ENCODE measurements at regions of chr4 and their contacts with region 1.

Region 1: DNA sequence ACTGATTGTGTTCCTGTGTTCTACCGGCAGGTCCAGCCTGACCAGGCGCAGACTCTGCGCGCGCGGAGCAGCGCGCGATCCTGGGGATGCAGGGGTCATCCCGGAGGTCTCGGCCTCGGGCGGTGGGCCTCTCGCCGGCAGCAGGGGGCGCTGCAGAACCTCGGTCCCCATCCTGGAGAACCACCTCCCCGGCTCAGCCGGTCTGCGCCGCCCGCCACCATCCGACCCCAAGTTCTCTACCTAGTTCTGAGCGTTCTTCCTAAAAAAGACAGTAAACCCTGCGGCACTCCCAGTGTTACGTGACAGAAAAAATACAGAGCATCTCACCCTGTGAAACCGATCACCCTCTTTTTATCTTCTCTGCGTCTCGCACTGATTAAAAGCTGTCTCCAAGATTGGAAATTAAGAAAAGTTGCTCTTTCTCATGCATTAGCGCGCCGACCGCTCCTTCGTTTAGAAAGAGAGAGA is 1.6 kb downstream of the TRPC3 start:
- DNase-seq: peak; percentile 67 to 89 (median 80)
- ATAC-seq: peak; percentile 80
- H3K4me3 ChIP-seq: peak overlapping the region; percentile 73
- H3K4me3 Mint-ChIP-seq: peak overlapping the region; percentile 84
- H3K27ac ChIP-seq: no peak overlapping the region
- H3K27ac Mint-ChIP-seq: no peak overlapping the region
- H3K4me1 ChIP-seq: peaks cover 16% of the 10 kb centered on the region
- H3K4me1 Mint-ChIP-seq: peaks cover 9% of the 10 kb centered on the region
- H3K27me3 ChIP-seq: peaks cover 10 to 28% of the 10 kb centered on the region in 2 experiments
- H3K27me3 Mint-ChIP-seq: peaks cover 62% of the 10 kb centered on the region
- CTCF ChIP-seq: peak; percentile 81

Region 2: DNA sequence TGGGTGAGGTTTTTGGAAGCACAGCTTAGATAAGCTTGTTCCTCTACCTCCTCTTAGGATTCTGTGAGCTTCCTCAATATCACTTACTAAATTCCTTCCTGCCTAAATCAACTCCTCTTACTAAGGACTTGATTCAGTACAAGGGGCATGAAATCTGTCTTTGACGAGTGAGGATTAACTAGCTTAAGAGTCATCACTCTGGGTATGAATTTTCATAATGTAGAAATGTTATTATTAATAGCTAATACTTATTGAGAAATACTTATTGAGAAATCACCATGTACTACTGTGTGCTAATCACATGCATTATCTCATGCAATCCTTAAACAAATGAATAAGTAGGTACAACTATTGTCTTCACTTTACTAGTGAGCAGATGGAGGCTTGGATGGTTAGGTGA is 26.9 kb before region 1 on chr4:
- CTCF ChIA-PET with region 1: no interaction called
- POLR2A ChIA-PET with region 1: no interaction called
- intact Hi-C with region 1: no loop called
- DNase-seq: no peak
- ATAC-seq: no peak
- H3K4me3 ChIP-seq: no peak overlapping the region
- H3K4me3 Mint-ChIP-seq: no peak overlapping the region
- H3K27ac ChIP-seq: no peak overlapping the region
- H3K27ac Mint-ChIP-seq: no peak overlapping the region
- H3K4me1 ChIP-seq: no peaks in the 10 kb centered on the region
- H3K4me1 Mint-ChIP-seq: no peaks in the 10 kb centered on the region
- H3K27me3 ChIP-seq: no peaks in the 10 kb centered on the region
- H3K27me3 Mint-ChIP-seq: peaks cover 17% of the 10 kb centered on the region
- CTCF ChIP-seq: no peak

Region 3: DNA sequence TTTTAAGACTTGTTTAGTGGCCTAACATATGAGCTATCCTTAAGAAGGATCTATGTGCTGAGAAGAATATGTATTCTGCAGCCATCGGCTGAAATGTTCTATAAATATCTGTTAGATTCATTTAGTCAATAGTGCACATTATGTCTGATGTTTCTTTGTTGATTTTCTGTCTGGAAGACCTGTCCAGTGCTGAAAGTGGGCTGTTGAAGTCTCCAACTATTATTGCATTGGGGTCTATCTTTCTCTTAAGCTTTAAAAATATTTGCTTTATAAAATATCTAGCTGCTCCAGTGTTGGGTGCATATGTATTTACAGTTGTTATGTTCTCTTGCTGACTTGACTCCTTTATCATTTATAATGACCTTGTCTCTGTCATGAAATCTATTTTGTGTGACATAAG is 192.4 kb after region 1 on chr4:
- CTCF ChIA-PET with region 1: no interaction called
- POLR2A ChIA-PET with region 1: no interaction called
- intact Hi-C with region 1: loop called in 1 of 2 experiments (anchors 10 kb)
- DNase-seq: no peak
- ATAC-seq: no peak
- H3K4me3 ChIP-seq: no peak overlapping the region
- H3K4me3 Mint-ChIP-seq: no peak overlapping the region
- H3K27ac ChIP-seq: no peak overlapping the region
- H3K27ac Mint-ChIP-seq: no peak overlapping the region
- H3K4me1 ChIP-seq: no peaks in the 10 kb centered on the region
- H3K4me1 Mint-ChIP-seq: peaks cover 5% of the 10 kb centered on the region
- H3K27me3 ChIP-seq: peaks cover 0 to 2% of the 10 kb centered on the region in 2 experiments
- H3K27me3 Mint-ChIP-seq: peaks cover 23% of the 10 kb centered on the region
- CTCF ChIP-seq: no peak

Region 4: GRCh38 chr4:122218762-122219161 is 268.5 kb after region 1 on chr4:
- CTCF ChIA-PET with region 1: no interaction called
- POLR2A ChIA-PET with region 1: no interaction called
- intact Hi-C with region 1: loop called (anchors 1 to 10 kb)
- DNase-seq: peak in 3 of 14 experiments; percentile 19 to 26 (median 24)
- ATAC-seq: peak; percentile 34
- H3K4me3 ChIP-seq: no peak overlapping the region
- H3K4me3 Mint-ChIP-seq: no peak overlapping the region
- H3K27ac ChIP-seq: no peak overlapping the region
- H3K27ac Mint-ChIP-seq: no peak overlapping the region
- H3K4me1 ChIP-seq: no peaks in the 10 kb centered on the region
- H3K4me1 Mint-ChIP-seq: peaks cover 44% of the 10 kb centered on the region
- H3K27me3 ChIP-seq: no peaks in the 10 kb centered on the region
- H3K27me3 Mint-ChIP-seq: no peaks in the 10 kb centered on the region
- CTCF ChIP-seq: peak; percentile 36

Region 5: DNA sequence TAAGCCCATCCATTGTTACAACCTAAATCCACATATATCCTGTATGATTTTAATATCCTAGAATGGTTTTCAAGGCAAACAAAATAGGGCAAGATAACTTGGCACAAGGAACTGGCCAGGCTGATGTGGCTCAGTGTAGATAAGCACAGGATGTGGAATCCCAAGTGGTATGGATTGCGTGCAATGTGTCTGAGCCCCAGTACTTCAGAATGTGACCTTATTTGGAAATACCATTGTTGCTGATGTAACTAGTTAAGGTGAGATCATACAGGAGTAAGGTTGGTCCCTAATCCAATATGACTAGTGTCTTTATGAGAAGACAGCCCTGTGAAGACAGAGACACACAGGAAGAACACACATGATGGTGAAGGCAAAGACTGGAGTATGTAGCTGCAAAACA is 598.2 kb after region 1 on chr4:
- CTCF ChIA-PET with region 1: no interaction called
- POLR2A ChIA-PET with region 1: no interaction called
- intact Hi-C with region 1: no loop called
- DNase-seq: no peak
- ATAC-seq: no peak
- H3K4me3 ChIP-seq: no peak overlapping the region
- H3K4me3 Mint-ChIP-seq: no peak overlapping the region
- H3K27ac ChIP-seq: no peak overlapping the region
- H3K27ac Mint-ChIP-seq: no peak overlapping the region
- H3K4me1 ChIP-seq: peaks cover under 1% of the 10 kb centered on the region
- H3K4me1 Mint-ChIP-seq: no peaks in the 10 kb centered on the region
- H3K27me3 ChIP-seq: no peaks in the 10 kb centered on the region
- H3K27me3 Mint-ChIP-seq: no peaks in the 10 kb centered on the region
- CTCF ChIP-seq: no peak

Measured in CD4-positive, alpha-beta T cell (primary cell).